Motor neuron (in vitro differentiated cells): ENCODE measurements at regions of chr22 and their contacts with region 1.

Region 1: GRCh38 chr22:37538590-37539357 is 19.6 kb upstream of the CARD10 start:
- ATAC-seq: peak; percentile 95 to 100 (median 98)
- H3K4me3 ChIP-seq: no peak overlapping the region
- H3K27ac ChIP-seq: no peak overlapping the region
- H3K4me1 ChIP-seq: peaks cover 9 to 16% of the 10 kb centered on the region in 2 donors

Region 2: DNA sequence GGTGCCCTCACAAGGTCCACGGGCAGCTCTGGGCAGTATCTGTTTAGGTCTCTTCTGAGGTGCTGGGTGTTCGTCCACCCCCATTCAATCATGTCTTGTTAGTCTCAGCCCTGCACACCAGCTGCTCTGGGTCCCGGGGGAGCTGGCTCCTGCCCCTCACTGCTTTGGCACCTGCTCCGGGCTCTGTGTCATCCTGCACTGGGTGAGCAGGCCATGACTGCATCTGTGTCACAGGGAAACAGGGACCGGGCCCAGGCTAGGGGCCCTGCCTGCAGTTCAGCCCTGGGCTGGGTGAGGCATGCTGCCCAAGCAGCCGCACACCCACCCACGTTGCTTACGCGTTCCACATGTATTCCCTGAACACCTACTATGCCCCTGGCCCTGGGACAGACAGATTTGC is 155.4 kb before region 1 on chr22:
- in situ Hi-C with region 1: no loop called
- ATAC-seq: peak in 5 of 8 experiments; percentile 45 to 65 (median 58)
- H3K4me3 ChIP-seq: no peak overlapping the region
- H3K27ac ChIP-seq: no peak overlapping the region
- H3K4me1 ChIP-seq: peaks cover 42 to 51% of the 10 kb centered on the region in 2 donors

Region 3: DNA sequence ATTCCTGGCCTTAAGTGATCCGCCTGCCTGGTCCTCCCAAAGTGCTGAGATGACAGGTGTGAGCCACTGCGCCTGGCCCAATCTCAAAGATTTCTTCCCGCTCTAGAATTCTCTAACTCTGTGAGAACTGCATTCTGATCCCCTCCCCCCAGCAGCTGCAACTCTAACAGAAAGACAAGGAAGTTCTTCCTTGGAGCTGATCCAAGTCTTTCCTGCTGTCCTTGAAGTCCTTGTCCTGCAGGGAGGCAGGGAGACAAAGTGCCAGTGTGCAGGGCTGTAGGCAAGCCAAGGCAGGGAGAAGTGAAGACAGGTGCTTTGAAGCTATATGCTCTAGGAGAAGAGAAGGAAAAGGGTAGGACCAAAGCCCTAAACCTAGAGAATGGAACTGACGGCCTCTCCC is 60.4 kb after region 1 on chr22:
- in situ Hi-C with region 1: loop called in 1 of 9 experiments (anchors 10 kb)
- ATAC-seq: no peak
- H3K4me3 ChIP-seq: no peak overlapping the region
- H3K27ac ChIP-seq: no peak overlapping the region
- H3K4me1 ChIP-seq: peaks cover 0 to 5% of the 10 kb centered on the region in 2 donors